ENCODE measurements at regions of chr7 and their contacts with region 1.

Region 1: GRCh38 chr7:20310963-20311742 is 19.5 kb upstream of the ITGB8 start:
- DNase-seq: peak; percentile 64
- H3K4me3 Mint-ChIP-seq: no peak overlapping the region
- H3K27ac Mint-ChIP-seq: no peak overlapping the region
- H3K4me1 Mint-ChIP-seq: peaks cover 12% of the 10 kb centered on the region
- H3K27me3 Mint-ChIP-seq: no peaks in the 10 kb centered on the region
- CTCF ChIP-seq: peak; percentile 65

Region 2: GRCh38 chr7:19713676-19714075 is 597.5 kb before region 1 on chr7:
- CTCF ChIA-PET with region 1: interaction called, 20 read pairs
- POLR2A ChIA-PET with region 1: interaction called, 3 read pairs
- intact Hi-C with region 1: no loop called
- DNase-seq: peak; percentile 58
- H3K4me3 Mint-ChIP-seq: no peak overlapping the region
- H3K27ac Mint-ChIP-seq: no peak overlapping the region
- H3K4me1 Mint-ChIP-seq: peaks cover 16% of the 10 kb centered on the region
- H3K27me3 Mint-ChIP-seq: no peaks in the 10 kb centered on the region
- CTCF ChIP-seq: peak; percentile 47

Region 3: GRCh38 chr7:19754521-19755116 is 556.5 kb before region 1 on chr7:
- CTCF ChIA-PET with region 1: interaction called, 31 read pairs
- POLR2A ChIA-PET with region 1: no interaction called
- intact Hi-C with region 1: loop called (anchors 2 kb)
- DNase-seq: peak; percentile 56
- H3K4me3 Mint-ChIP-seq: no peak overlapping the region
- H3K27ac Mint-ChIP-seq: no peak overlapping the region
- H3K4me1 Mint-ChIP-seq: peaks cover 6% of the 10 kb centered on the region
- H3K27me3 Mint-ChIP-seq: no peaks in the 10 kb centered on the region
- CTCF ChIP-seq: peak; percentile 53

Region 4: DNA sequence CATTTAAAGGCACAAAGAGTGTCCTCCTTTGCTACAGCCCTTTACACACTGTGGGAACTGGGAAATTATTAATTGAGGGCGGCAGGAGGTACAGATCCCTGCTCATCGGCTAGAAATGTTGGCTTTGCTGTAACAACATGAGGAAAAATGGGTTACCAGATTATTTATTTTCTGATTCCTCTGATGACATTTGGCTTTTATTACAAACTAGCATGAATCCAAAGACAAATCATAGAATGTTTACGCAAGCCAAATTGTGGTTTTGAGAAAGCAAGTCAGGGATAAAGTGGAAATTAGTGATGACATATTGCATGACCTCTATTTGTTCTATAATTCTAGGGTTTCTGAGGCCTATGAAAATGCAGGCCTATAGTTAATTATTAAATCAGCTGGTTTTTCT is 411.6 kb before region 1 on chr7:
- CTCF ChIA-PET with region 1: no interaction called
- POLR2A ChIA-PET with region 1: no interaction called
- intact Hi-C with region 1: no loop called
- DNase-seq: no peak
- H3K4me3 Mint-ChIP-seq: no peak overlapping the region
- H3K27ac Mint-ChIP-seq: no peak overlapping the region
- H3K4me1 Mint-ChIP-seq: peaks cover 6% of the 10 kb centered on the region
- H3K27me3 Mint-ChIP-seq: no peaks in the 10 kb centered on the region
- CTCF ChIP-seq: no peak

Region 5: DNA sequence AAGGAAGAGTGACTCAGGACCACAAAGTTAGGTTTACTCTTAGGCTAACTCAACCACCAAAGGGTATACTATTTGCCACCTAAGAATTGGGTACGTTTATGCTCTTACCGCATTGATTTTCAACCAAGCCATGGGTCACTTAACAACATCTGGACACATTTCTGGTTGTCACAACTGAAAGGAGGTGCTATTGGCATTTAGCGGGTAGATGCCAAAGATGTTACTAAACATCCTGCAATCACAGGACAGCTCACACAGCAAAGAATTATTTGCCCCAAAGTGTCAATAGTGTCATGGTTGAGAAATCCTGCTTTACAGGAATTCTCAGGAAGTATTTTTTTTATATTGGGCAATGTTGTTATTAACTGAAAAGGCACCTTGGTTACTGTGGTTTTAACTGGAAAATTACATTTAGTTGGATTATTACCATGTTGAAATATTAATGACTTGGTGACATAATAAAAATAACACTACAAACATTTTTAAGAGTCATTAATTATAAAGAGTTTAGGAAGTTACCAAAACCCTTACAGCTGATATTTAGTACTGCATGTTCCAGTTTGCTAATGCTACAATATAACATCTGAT is 352.8 kb before region 1 on chr7:
- CTCF ChIA-PET with region 1: no interaction called
- POLR2A ChIA-PET with region 1: no interaction called
- intact Hi-C with region 1: loop called (anchors 10 kb)
- DNase-seq: peak; percentile 89
- H3K4me3 Mint-ChIP-seq: peak overlapping the region; percentile 29
- H3K27ac Mint-ChIP-seq: peak overlapping the region; percentile 96
- H3K4me1 Mint-ChIP-seq: peaks cover 12% of the 10 kb centered on the region
- H3K27me3 Mint-ChIP-seq: no peaks in the 10 kb centered on the region
- CTCF ChIP-seq: no peak

Region 6: GRCh38 chr7:19982841-19983835 is 328.0 kb before region 1 on chr7:
- CTCF ChIA-PET with region 1: no interaction called
- POLR2A ChIA-PET with region 1: no interaction called
- intact Hi-C with region 1: loop called (anchors 2 kb)
- DNase-seq: peak; percentile 57
- H3K4me3 Mint-ChIP-seq: no peak overlapping the region
- H3K27ac Mint-ChIP-seq: no peak overlapping the region
- H3K4me1 Mint-ChIP-seq: no peaks in the 10 kb centered on the region
- H3K27me3 Mint-ChIP-seq: no peaks in the 10 kb centered on the region
- CTCF ChIP-seq: peak; percentile 14

Region 7: DNA sequence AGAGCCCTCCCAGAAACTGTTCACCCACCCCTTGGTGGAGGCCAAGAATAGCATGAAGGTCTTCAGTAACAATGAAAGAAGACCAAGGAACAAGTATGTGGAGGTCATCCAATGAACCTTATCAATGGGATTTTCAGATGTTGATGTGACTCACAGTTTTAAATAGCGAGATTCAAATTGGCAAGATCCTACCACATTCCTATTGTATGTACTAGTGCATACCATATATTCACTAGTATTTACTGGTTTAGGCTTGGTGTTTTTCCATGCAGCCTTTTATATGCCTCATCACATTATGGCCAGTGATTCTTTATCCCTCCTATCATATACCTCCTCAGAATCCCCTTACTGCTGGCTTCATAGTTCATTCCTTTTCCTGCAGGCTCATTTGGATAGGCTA is 74.0 kb after region 1 on chr7:
- CTCF ChIA-PET with region 1: no interaction called
- POLR2A ChIA-PET with region 1: no interaction called
- intact Hi-C with region 1: no loop called
- DNase-seq: no peak
- H3K4me3 Mint-ChIP-seq: no peak overlapping the region
- H3K27ac Mint-ChIP-seq: peak overlapping the region; percentile 20
- H3K4me1 Mint-ChIP-seq: peaks cover 9% of the 10 kb centered on the region
- H3K27me3 Mint-ChIP-seq: no peaks in the 10 kb centered on the region
- CTCF ChIP-seq: no peak